WTC11 (cell line): ENCODE measurements at regions of chr1 and their contacts with region 1.

Region 1: GRCh38 chr1:46442317-46443161 is 47.1 kb upstream of the DMBX1 start:
- DNase-seq: peak; percentile 96
- ATAC-seq: peak; percentile 85
- H3K4me3 Mint-ChIP-seq: peak overlapping the region; percentile 86
- H3K27ac Mint-ChIP-seq: peak overlapping the region; percentile 96
- H3K4me1 Mint-ChIP-seq: peaks cover 22% of the 10 kb centered on the region
- H3K27me3 Mint-ChIP-seq: peaks cover 51% of the 10 kb centered on the region
- CTCF ChIP-seq: peak; percentile 96

Region 2: DNA sequence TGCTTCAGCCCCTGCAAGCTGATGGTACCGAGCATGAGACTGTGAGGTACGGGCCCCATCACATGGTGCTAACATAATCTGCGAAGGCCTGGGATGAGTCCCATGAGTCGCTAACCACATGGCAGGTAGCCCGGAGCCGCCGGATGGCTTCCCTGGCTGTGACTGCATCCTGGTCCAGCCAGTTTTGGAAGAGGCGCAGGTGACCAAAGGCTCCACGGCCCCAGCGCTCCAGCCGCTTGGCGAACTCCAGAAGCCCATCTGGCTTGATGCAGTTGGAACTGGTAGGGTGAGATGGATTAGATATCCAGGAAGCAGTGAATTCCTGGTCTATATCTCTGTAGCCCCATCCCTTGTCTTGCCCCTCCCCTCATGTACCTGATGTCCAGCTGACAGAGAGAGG is 163.7 kb before region 1 on chr1:
- CTCF ChIA-PET with region 1: no interaction called
- POLR2A ChIA-PET with region 1: no interaction called
- DNase-seq: no peak
- ATAC-seq: no peak
- H3K4me3 Mint-ChIP-seq: no peak overlapping the region
- H3K27ac Mint-ChIP-seq: no peak overlapping the region
- H3K4me1 Mint-ChIP-seq: no peaks in the 10 kb centered on the region
- H3K27me3 Mint-ChIP-seq: no peaks in the 10 kb centered on the region
- CTCF ChIP-seq: no peak

Region 3: GRCh38 chr1:46401964-46402626 is 40.4 kb before region 1 on chr1:
- CTCF ChIA-PET with region 1: interaction called, 28 read pairs
- POLR2A ChIA-PET with region 1: no interaction called
- DNase-seq: peak; percentile 80
- ATAC-seq: peak; percentile 82
- H3K4me3 Mint-ChIP-seq: no peak overlapping the region
- H3K27ac Mint-ChIP-seq: no peak overlapping the region
- H3K4me1 Mint-ChIP-seq: peaks cover 39% of the 10 kb centered on the region
- H3K27me3 Mint-ChIP-seq: no peaks in the 10 kb centered on the region
- CTCF ChIP-seq: no peak

Region 4: GRCh38 chr1:46431691-46432090 is 10.8 kb before region 1 on chr1:
- CTCF ChIA-PET with region 1: interaction called, 21 read pairs
- POLR2A ChIA-PET with region 1: no interaction called
- DNase-seq: no peak
- ATAC-seq: peak; percentile 32
- H3K4me3 Mint-ChIP-seq: no peak overlapping the region
- H3K27ac Mint-ChIP-seq: no peak overlapping the region
- H3K4me1 Mint-ChIP-seq: no peaks in the 10 kb centered on the region
- H3K27me3 Mint-ChIP-seq: peaks cover 15% of the 10 kb centered on the region
- CTCF ChIP-seq: no peak

Region 5: GRCh38 chr1:46489638-46490405 is 47.3 kb after region 1 on chr1 and contains the start of gene DMBX1:
- CTCF ChIA-PET with region 1: interaction called, 79 read pairs
- POLR2A ChIA-PET with region 1: interaction called, 3 read pairs
- DNase-seq: peak; percentile 82
- ATAC-seq: peak; percentile 62
- H3K4me3 Mint-ChIP-seq: peak within 1 kb of the TSS; percentile 89
- H3K27ac Mint-ChIP-seq: no peak within 1 kb of the TSS
- H3K4me1 Mint-ChIP-seq: peaks cover 60% of the 10 kb centered on the region
- H3K27me3 Mint-ChIP-seq: peaks cover 99% of the 10 kb centered on the region
- CTCF ChIP-seq: no peak
- total RNA-seq, gene DMBX1: 1.7 to 3.7 TPM (median 1.8 TPM) in 3 replicates

Region 6: DNA sequence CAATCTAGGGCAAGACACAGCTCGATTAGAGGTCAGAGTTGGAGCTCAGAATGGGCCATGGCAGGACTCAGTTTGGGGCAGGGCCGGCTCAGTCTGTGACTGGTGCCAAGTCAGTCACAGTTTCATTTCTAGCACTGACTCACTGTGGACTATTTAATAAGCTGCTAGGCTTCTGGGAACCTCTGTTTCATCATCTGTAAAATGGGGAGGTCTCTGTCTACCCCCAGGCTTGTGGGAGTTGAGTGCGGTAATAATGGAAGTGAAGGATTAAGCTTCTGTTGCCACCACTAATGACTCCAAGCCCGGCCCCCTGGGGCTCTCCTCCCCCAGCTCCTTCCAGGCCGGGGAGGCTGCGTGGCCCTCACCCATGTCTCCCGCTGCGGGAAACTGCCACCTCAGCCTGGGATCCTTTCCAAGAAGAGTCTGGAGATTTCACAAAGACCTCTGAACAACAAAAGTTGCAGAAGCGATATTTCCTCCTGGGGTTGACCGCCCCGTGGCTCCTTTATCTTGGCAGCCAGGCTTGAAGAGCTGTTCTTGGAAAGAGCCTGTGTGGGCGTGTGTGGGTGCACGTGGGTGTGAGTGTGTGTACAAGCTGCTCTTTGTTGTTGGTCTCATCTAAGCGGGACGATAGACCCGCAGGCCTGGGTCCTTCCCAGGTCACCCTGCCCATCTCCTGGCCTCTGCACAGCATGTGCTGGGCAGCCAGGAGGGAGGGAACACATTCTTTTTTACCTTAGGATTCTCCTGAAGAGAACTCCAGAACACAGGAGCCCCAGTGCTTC is 79.8 kb after region 1 on chr1:
- CTCF ChIA-PET with region 1: interaction called, 241 read pairs
- POLR2A ChIA-PET with region 1: interaction called, 5 read pairs
- DNase-seq: no peak
- ATAC-seq: no peak
- H3K4me3 Mint-ChIP-seq: no peak overlapping the region
- H3K27ac Mint-ChIP-seq: no peak overlapping the region
- H3K4me1 Mint-ChIP-seq: peaks cover 71% of the 10 kb centered on the region
- H3K27me3 Mint-ChIP-seq: peaks cover 64% of the 10 kb centered on the region
- CTCF ChIP-seq: no peak

Region 7: DNA sequence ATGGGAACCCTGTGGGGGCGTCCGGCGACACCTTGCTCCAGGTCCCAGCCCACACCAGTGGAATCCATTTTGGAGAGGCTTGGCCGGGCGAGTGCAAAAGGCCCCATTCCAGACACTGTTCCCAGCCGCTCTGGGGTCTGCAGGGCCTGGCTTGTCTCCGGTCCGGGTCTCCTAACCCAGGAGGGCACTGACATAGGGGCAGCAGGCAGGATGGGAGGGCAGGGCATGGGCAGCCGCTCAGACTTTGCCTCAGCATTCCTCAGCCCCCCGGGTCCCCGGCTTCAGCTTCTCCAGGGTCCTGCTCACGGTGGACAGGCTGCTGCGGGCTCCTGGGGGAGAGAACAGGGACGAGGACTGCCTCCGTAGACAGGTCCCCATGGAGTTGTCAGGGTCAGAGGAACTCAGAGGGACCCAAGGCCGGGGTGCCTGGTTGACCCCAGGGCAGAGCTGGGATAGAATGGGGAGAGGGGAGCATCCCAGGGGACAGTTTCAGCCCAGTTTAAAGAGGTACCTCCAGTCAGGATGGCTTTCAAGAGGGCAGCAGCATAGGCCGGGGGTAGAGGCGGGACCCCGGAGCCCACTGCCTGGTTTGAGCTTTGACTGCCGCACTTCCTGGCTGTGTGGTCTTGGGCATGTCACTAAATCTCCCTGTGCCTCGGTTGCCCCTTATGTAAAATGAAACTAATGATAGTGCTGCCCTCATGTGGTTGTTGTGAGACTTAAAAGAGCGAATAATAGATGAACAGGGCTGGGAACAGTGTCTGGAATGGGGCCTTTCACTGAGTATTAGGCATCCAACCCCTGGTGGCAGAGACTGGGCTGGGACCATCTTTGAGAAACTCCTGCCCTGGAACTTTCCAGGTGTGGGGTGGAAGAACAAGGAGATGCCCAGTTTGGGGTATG is 105.2 kb after region 1 on chr1:
- CTCF ChIA-PET with region 1: interaction called, 42 read pairs
- POLR2A ChIA-PET with region 1: no interaction called
- DNase-seq: no peak
- ATAC-seq: peak; percentile 44
- H3K4me3 Mint-ChIP-seq: no peak overlapping the region
- H3K27ac Mint-ChIP-seq: no peak overlapping the region
- H3K4me1 Mint-ChIP-seq: peaks cover 34% of the 10 kb centered on the region
- H3K27me3 Mint-ChIP-seq: peaks cover 47% of the 10 kb centered on the region
- CTCF ChIP-seq: 0 out of 2 replicates have a peak, but pooled peaks have one; percentile 25

Region 8: GRCh38 chr1:46616277-46617107 is 174.0 kb after region 1 on chr1 and contains the start of gene MOB3C:
- CTCF ChIA-PET with region 1: interaction called, 14 read pairs
- POLR2A ChIA-PET with region 1: no interaction called
- DNase-seq: peak; percentile 61
- ATAC-seq: peak; percentile 14
- H3K4me3 Mint-ChIP-seq: peak within 1 kb of the TSS; percentile 86
- H3K27ac Mint-ChIP-seq: no peak within 1 kb of the TSS
- H3K4me1 Mint-ChIP-seq: peaks cover 52% of the 10 kb centered on the region
- H3K27me3 Mint-ChIP-seq: peaks cover 30% of the 10 kb centered on the region
- CTCF ChIP-seq: no peak
- total RNA-seq, gene MOB3C: 3.1 to 4.0 TPM (median 3.4 TPM) in 3 replicates

Region 9: DNA sequence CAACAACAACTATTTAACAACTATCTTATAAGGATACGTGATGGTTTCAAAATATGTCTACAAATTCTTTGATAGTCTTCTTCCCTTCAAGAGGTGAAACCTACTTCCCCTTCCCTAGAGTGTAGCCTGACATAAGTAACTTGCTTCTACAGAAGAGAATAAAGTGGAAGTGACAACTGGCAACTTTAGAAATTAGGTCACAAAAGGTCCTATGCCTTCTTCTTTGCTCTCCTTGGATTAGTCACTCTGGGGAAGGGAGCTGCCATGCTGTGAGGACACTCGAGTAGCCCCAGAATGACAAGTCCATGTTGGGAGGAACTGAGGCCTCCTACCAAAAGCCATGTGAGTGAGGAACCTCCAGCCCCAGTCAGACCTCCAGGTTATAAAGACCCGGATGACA is 257.1 kb after region 1 on chr1:
- CTCF ChIA-PET with region 1: no interaction called
- POLR2A ChIA-PET with region 1: no interaction called
- DNase-seq: no peak
- ATAC-seq: no peak
- H3K4me3 Mint-ChIP-seq: no peak overlapping the region
- H3K27ac Mint-ChIP-seq: no peak overlapping the region
- H3K4me1 Mint-ChIP-seq: no peaks in the 10 kb centered on the region
- H3K27me3 Mint-ChIP-seq: no peaks in the 10 kb centered on the region
- CTCF ChIP-seq: no peak